CD14-positive monocyte (primary cell): ENCODE measurements at regions of chr19 and their contacts with region 1.

Region 1: GRCh38 chr19:16185123-16185767 is at the start of gene FAM32A:
- DNase-seq: peak; percentile 99 to 100 (median 99)
- H3K4me3 ChIP-seq: peak within 1 kb of the TSS; percentile 66 to 97 (median 90)
- H3K4me3 Mint-ChIP-seq: peak within 1 kb of the TSS; percentile 92 to 98
- H3K27ac ChIP-seq: peak within 1 kb of the TSS; percentile 20 to 87
- H3K27ac Mint-ChIP-seq: peak within 1 kb of the TSS; percentile 94 to 97 (median 95)
- H3K4me1 ChIP-seq: peaks cover 16 to 34% of the 10 kb centered on the region in 2 donors
- H3K4me1 Mint-ChIP-seq: peaks cover 27% of the 10 kb centered on the region
- H3K27me3 ChIP-seq: no peaks in the 10 kb centered on the region
- H3K27me3 Mint-ChIP-seq: no peaks in the 10 kb centered on the region
- CTCF ChIP-seq: no peak
- polyA plus RNA-seq, gene FAM32A: 92.2 to 245 (median 219) TPM

Region 2: DNA sequence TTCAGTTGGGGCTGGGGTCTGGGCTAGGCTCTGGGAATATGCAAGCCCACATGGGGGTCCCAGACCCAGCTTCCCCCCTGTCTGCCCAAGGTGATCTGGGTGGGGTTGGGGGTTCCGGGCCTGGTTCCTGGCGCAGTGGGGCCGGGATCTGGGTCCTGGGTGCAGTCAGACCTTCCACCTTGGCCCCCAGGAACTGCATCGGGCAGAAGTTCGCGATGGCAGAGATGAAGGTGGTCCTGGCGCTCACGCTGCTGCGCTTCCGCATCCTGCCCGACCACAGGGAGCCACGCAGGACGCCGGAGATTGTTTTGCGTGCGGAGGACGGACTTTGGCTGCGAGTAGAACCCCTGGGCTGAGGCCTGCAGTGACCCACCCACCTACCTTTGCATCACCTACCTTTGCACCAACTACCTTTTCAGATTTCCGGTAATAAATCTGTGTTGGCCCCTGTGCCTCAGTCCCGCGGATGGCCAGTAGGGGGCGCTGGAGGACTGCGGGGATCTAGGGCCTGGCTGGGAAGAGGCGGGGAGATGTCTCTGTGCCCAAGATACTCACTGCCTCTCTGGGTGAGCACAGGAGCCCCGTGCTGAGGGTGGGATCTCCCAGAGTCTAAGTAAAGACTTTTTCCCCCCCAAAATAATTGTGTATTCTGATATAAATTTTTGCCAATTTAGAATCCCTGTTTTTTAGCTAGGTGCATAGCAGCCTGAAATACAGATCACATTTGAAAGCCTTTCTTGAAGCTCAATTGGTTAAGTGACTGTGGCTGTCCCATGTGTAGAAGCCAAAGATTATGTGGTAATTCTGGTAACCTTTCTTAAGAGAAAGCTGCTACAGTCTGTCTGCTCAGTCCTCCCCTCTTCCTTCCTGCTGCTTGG is 556.0 kb before region 1 on chr19:
- intact Hi-C with region 1: loop called (anchors 5 to 10 kb)
- DNase-seq: peak; percentile 61 to 75 (median 62)
- H3K4me3 ChIP-seq: no peak overlapping the region
- H3K4me3 Mint-ChIP-seq: no peak overlapping the region
- H3K27ac ChIP-seq: no peak overlapping the region
- H3K27ac Mint-ChIP-seq: peak overlapping the region in 1 of 7 donors; percentile 64
- H3K4me1 ChIP-seq: peaks cover 21 to 22% of the 10 kb centered on the region in 2 donors
- H3K4me1 Mint-ChIP-seq: peaks cover 23% of the 10 kb centered on the region
- H3K27me3 ChIP-seq: no peaks in the 10 kb centered on the region
- H3K27me3 Mint-ChIP-seq: peaks cover 0 to 8% (median 8%) of the 10 kb centered on the region in 3 donors
- CTCF ChIP-seq: peak; percentile 99

Region 3: GRCh38 chr19:16041299-16041990 is 143.8 kb before region 1 on chr19:
- intact Hi-C with region 1: loop called (anchors 1 to 5 kb)
- DNase-seq: peak; percentile 62 to 74 (median 66)
- H3K4me3 ChIP-seq: peak overlapping the region in 1 of 3 experiments; percentile 17
- H3K4me3 Mint-ChIP-seq: peak overlapping the region; percentile 20 to 63
- H3K27ac ChIP-seq: no peak overlapping the region
- H3K27ac Mint-ChIP-seq: peak overlapping the region in 2 of 7 donors; percentile 30 to 56
- H3K4me1 ChIP-seq: peaks cover 8 to 17% of the 10 kb centered on the region in 2 donors
- H3K4me1 Mint-ChIP-seq: peaks cover 8% of the 10 kb centered on the region
- H3K27me3 ChIP-seq: no peaks in the 10 kb centered on the region
- H3K27me3 Mint-ChIP-seq: peaks cover 4 to 6% (median 5%) of the 10 kb centered on the region in 3 donors
- CTCF ChIP-seq: peak; percentile 97

Region 4: DNA sequence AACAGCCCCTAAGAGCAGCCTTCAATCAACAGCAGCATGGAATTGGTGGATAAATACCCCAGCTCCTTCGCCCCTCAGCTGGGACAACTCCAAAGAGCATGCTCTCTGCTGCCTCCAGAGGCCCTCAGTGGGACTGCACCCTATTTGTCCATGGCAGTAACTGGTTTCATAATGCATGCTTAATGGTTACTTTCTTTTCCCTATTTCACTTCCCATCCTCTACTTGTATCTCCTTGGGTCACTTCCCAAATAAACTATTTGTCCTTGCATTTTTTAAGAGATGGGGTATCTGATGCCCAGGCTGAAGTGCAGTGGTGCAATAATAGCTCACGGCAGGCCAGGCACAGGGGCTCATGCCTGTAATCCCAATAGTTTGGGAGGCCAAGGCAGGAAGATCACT is 122.5 kb before region 1 on chr19:
- intact Hi-C with region 1: loop called in 1 of 2 experiments (anchors 5 kb)
- DNase-seq: peak; percentile 66 to 86 (median 79)
- H3K4me3 ChIP-seq: peak overlapping the region in 1 of 3 experiments; percentile 27
- H3K4me3 Mint-ChIP-seq: no peak overlapping the region
- H3K27ac ChIP-seq: peak overlapping the region; percentile 26 to 59
- H3K27ac Mint-ChIP-seq: peak overlapping the region; percentile 68 to 92 (median 88)
- H3K4me1 ChIP-seq: peaks cover 5 to 12% of the 10 kb centered on the region in 2 donors
- H3K4me1 Mint-ChIP-seq: peaks cover 23% of the 10 kb centered on the region
- H3K27me3 ChIP-seq: no peaks in the 10 kb centered on the region
- H3K27me3 Mint-ChIP-seq: no peaks in the 10 kb centered on the region
- CTCF ChIP-seq: peak; percentile 98

Region 5: GRCh38 chr19:16070366-16070990 is 114.8 kb before region 1 on chr19:
- intact Hi-C with region 1: loop called (anchors 5 kb)
- DNase-seq: peak; percentile 81 to 94 (median 88)
- H3K4me3 ChIP-seq: peak overlapping the region in 1 of 3 experiments; percentile 46
- H3K4me3 Mint-ChIP-seq: peak overlapping the region; percentile 47 to 73
- H3K27ac ChIP-seq: peak overlapping the region; percentile 15 to 72
- H3K27ac Mint-ChIP-seq: peak overlapping the region in 4 of 7 donors; percentile 47 to 84 (median 66)
- H3K4me1 ChIP-seq: peaks cover 15 to 20% of the 10 kb centered on the region in 2 donors
- H3K4me1 Mint-ChIP-seq: peaks cover 16% of the 10 kb centered on the region
- H3K27me3 ChIP-seq: no peaks in the 10 kb centered on the region
- H3K27me3 Mint-ChIP-seq: no peaks in the 10 kb centered on the region
- CTCF ChIP-seq: peak; percentile 10

Region 6: GRCh38 chr19:16111160-16111908 is 73.9 kb before region 1 on chr19 and contains the start of gene RAB8A:
- intact Hi-C with region 1: loop called (anchors 2 to 5 kb)
- DNase-seq: peak; percentile 99 to 100 (median 99)
- H3K4me3 ChIP-seq: peak within 1 kb of the TSS; percentile 75 to 96 (median 94)
- H3K4me3 Mint-ChIP-seq: peak within 1 kb of the TSS; percentile 94 to 98
- H3K27ac ChIP-seq: peak within 1 kb of the TSS; percentile 74 to 96
- H3K27ac Mint-ChIP-seq: peak within 1 kb of the TSS; percentile 94 to 99 (median 98)
- H3K4me1 ChIP-seq: peaks cover 48 to 53% of the 10 kb centered on the region in 2 donors
- H3K4me1 Mint-ChIP-seq: peaks cover 37% of the 10 kb centered on the region
- H3K27me3 ChIP-seq: no peaks in the 10 kb centered on the region
- H3K27me3 Mint-ChIP-seq: peaks cover 0 to 2% (median 0%) of the 10 kb centered on the region in 3 donors
- CTCF ChIP-seq: peak; percentile 96
- polyA plus RNA-seq, gene RAB8A: 109 to 124 (median 114) TPM